ENCODE measurements at regions of chr14 and their contacts with region 1.

Region 1: DNA sequence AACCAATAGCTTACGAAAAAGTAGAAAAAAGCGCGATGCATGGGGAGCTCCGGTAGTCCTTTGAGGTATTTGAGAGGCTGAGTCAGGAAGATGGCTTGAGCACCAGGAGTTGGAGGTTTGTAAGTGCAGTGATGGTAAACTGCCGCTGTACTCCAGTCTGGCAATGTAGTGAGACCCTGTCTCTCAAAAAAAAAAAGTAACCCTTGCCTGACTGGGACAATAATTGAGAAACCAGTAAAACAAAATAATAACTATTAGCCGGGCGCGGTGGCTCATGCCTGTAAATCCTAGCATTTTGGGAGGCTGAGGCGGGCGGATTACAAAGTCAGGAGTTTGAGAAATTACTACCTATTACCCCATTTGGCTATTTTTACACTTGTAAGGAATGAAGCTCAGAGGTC is 632 bp upstream of the ACOT2 start:
- DNase-seq: no peak
- ATAC-seq: no peak
- H3K4me3 ChIP-seq: peak overlapping the region in 1 of 5 experiments; percentile 70
- H3K4me3 Mint-ChIP-seq: peak overlapping the region; percentile 92
- H3K27ac ChIP-seq: no peak overlapping the region
- H3K27ac Mint-ChIP-seq: peak overlapping the region; percentile 94
- H3K4me1 ChIP-seq: peaks cover 19 to 32% of the 10 kb centered on the region in 2 donors
- H3K4me1 Mint-ChIP-seq: peaks cover 38% of the 10 kb centered on the region
- H3K27me3 ChIP-seq: no peaks in the 10 kb centered on the region
- H3K27me3 Mint-ChIP-seq: no peaks in the 10 kb centered on the region
- CTCF ChIP-seq: no peak

Region 2: GRCh38 chr14:73491256-73492042 is 76.9 kb before region 1 on chr14:
- CTCF ChIA-PET with region 1: interaction called, 5 read pairs
- POLR2A ChIA-PET with region 1: interaction called, 4 read pairs
- intact Hi-C with region 1: loop called (anchors 5 kb)
- DNase-seq: peak; percentile 79
- ATAC-seq: peak; percentile 50
- H3K4me3 ChIP-seq: peak overlapping the region; percentile 56 to 86 (median 83)
- H3K4me3 Mint-ChIP-seq: peak overlapping the region; percentile 94
- H3K27ac ChIP-seq: peak overlapping the region; percentile 55 to 64
- H3K27ac Mint-ChIP-seq: peak overlapping the region; percentile 92
- H3K4me1 ChIP-seq: peaks cover 21 to 32% of the 10 kb centered on the region in 2 donors
- H3K4me1 Mint-ChIP-seq: peaks cover 35% of the 10 kb centered on the region
- H3K27me3 ChIP-seq: no peaks in the 10 kb centered on the region
- H3K27me3 Mint-ChIP-seq: no peaks in the 10 kb centered on the region
- CTCF ChIP-seq: no peak

Region 3: GRCh38 chr14:73591690-73592448 is 23.5 kb after region 1 on chr14 and contains the start of gene ACOT4:
- CTCF ChIA-PET with region 1: interaction called, 10 read pairs
- POLR2A ChIA-PET with region 1: no interaction called
- intact Hi-C with region 1: loop called (anchors 2 kb)
- DNase-seq: peak; percentile 77
- ATAC-seq: peak; percentile 81
- H3K4me3 ChIP-seq: peak within 1 kb of the TSS in 4 of 5 experiments; percentile 44 to 79 (median 66)
- H3K4me3 Mint-ChIP-seq: peak within 1 kb of the TSS; percentile 71
- H3K27ac ChIP-seq: no peak within 1 kb of the TSS
- H3K27ac Mint-ChIP-seq: peak within 1 kb of the TSS; percentile 34
- H3K4me1 ChIP-seq: peaks cover 4 to 8% of the 10 kb centered on the region in 2 donors
- H3K4me1 Mint-ChIP-seq: peaks cover 3% of the 10 kb centered on the region
- H3K27me3 ChIP-seq: peaks cover 0 to 2% (median 0%) of the 10 kb centered on the region in 4 experiments
- H3K27me3 Mint-ChIP-seq: no peaks in the 10 kb centered on the region
- CTCF ChIP-seq: peak; percentile 18
- total RNA-seq, gene ACOT4: 0.42 and 0.83 TPM in 2 replicates

Region 4: DNA sequence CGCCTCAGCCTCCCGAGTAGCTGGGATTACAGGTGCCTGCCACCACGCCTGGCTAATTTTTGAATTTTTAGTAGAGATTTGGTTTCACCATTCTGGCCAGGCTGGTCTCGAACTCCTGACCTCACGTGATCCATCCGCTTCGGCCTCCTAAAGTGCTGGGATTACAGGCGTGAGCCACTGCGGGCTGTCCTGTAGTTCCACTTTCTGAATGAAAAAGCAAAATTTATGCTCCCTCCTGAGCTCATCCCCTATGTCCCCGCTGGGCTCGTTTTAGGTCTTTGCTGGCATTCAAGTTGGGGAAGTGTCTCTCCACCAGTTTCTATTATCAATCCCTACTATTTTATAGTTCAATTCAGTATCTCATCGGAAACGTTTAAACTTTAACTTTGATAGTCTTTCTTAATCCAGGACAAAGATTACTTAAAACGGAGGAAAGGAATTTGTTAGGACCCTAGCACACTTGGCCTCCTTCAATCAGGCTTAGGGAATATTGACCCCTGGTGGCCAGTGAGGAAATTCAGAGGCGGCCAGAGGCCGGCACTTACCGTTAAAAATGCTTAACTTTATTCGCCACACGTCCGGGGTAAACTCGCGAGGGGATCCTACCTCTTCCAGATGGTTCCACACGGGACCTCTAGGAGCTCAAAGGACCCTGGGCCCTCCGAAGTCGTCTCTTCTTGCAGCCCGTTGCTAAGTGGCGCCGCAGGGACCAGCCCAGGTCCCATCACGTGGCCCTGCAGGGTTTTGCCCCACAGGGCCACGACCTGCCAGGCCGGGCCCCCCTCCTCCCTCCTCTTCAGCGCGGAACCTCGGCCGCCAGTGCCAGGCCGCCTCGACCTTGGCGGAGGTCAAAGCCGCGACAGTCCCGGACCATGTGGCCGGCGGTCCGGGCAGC is 65.0 kb after region 1 on chr14:
- CTCF ChIA-PET with region 1: interaction called, 5 read pairs
- POLR2A ChIA-PET with region 1: no interaction called
- intact Hi-C with region 1: loop called (anchors 1 kb)
- DNase-seq: peak; percentile 79
- ATAC-seq: peak; percentile 86
- H3K4me3 ChIP-seq: peak overlapping the region; percentile 0 to 72 (median 65)
- H3K4me3 Mint-ChIP-seq: peak overlapping the region; percentile 85
- H3K27ac ChIP-seq: no peak overlapping the region
- H3K27ac Mint-ChIP-seq: no peak overlapping the region
- H3K4me1 ChIP-seq: peaks cover 14 to 15% of the 10 kb centered on the region in 2 donors
- H3K4me1 Mint-ChIP-seq: peaks cover 5% of the 10 kb centered on the region
- H3K27me3 ChIP-seq: peaks cover 0 to 15% (median 3%) of the 10 kb centered on the region in 4 experiments
- H3K27me3 Mint-ChIP-seq: peaks cover 24% of the 10 kb centered on the region
- CTCF ChIP-seq: peak; percentile 80